Gastrocnemius medialis (tissue), 4 donors: ENCODE measurements at regions of chr11 and their contacts with region 1.

Region 1: GRCh38 chr11:18634140-18635032 is at the start of gene SPTY2D1:
- DNase-seq: peak; percentile 99 to 100
- ATAC-seq: peak; percentile 99 to 100
- H3K4me3 ChIP-seq: peak within 1 kb of the TSS; percentile 84 to 96 (median 90)
- H3K27ac ChIP-seq: peak within 1 kb of the TSS; percentile 94 to 98 (median 96)
- H3K4me1 ChIP-seq: peaks cover 17 to 20% of the 10 kb centered on the region in 2 donors
- H3K27me3 ChIP-seq: no peaks in the 10 kb centered on the region
- CTCF ChIP-seq: peak in 1 of 5 experiments; percentile 12
- POLR2A ChIP-seq: peak; percentile 86 to 89
- total RNA-seq, gene SPTY2D1: 13.3 to 21.7 (median 17.7) TPM

Region 2: GRCh38 chr11:18321980-18322711 is 312.2 kb before region 1 on chr11 and contains the starts of genes GTF2H1 and HPS5:
- in situ Hi-C with region 1: loop called in 2 of 4 experiments (anchors 10 kb)
- intact Hi-C with region 1: loop called (anchors 1 kb)
- DNase-seq: peak; percentile 93 to 95
- ATAC-seq: peak; percentile 99 to 100
- H3K4me3 ChIP-seq: peak within 1 kb of the TSS; percentile 88 to 89 (median 88)
- H3K27ac ChIP-seq: peak within 1 kb of the TSS; percentile 95 to 99 (median 98)
- H3K4me1 ChIP-seq: peaks cover 31 to 37% of the 10 kb centered on the region in 2 donors
- H3K27me3 ChIP-seq: no peaks in the 10 kb centered on the region
- CTCF ChIP-seq: peak in 1 of 5 experiments; percentile 54
- POLR2A ChIP-seq: peak; percentile 53 to 81
- total RNA-seq, gene GTF2H1: 30.9 to 45.6 (median 33.2) TPM
- total RNA-seq, gene HPS5: 5.3 to 13.1 (median 9.7) TPM

Region 3: GRCh38 chr11:18526521-18527296 is 107.7 kb before region 1 on chr11 and contains the start of gene TSG101:
- in situ Hi-C with region 1: no loop called
- intact Hi-C with region 1: loop called (anchors 1 kb)
- DNase-seq: peak; percentile 82 to 91
- ATAC-seq: peak; percentile 96 to 98
- H3K4me3 ChIP-seq: peak within 1 kb of the TSS; percentile 70 to 99 (median 97)
- H3K27ac ChIP-seq: peak within 1 kb of the TSS; percentile 91 to 98 (median 96)
- H3K4me1 ChIP-seq: peaks cover 30 to 33% of the 10 kb centered on the region in 2 donors
- H3K27me3 ChIP-seq: no peaks in the 10 kb centered on the region
- CTCF ChIP-seq: no peak
- POLR2A ChIP-seq: peak; percentile 80 to 86
- total RNA-seq, gene TSG101: 106 to 180 (median 170) TPM

Region 4: DNA sequence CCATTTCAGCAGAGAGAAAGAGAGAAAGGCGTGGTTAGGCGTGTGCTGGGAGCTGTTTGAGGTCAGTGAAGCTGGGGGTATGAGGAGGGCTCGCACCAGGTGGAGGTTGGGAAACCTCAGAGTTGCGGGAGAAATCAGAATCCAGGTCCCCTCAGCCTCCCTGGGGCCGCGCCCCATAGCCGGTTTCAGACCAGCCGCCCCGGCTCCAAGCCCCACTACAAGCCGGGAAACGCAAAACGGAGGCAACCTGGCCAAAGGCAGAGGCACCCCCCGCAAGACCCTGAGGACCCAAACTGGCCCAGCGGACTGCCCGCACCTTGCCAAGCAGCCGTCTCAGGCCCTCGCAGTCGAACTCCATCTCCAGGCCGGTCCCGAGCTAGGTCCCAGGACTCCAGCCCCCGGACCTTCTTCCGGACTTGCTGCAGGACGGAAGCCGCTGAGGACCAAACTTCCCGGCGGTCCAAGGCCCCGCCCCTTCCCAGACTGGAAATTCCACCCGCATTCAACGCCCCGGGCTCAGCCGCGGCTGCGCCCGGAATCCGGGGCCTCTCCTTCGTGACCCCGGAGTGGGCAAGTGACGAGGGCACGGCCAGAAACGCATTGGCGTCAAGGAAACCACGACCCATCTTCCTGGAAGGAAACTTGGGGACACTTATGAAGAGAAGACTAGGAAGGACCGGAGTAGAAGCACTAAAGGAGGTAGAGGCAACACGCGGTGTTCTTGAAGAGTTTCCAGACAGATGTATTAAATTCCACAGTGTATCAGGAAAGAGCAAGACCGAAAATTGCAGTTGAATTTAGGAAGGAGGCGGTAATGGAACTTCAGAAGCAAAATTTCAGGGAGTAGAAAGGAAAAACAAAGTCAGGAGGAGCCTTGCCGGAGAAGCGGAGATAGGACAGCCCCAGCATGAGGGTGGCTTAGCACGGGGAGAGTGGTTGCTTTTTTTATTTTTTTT is 45.8 kb before region 1 on chr11 and contains the start of gene UEVLD:
- in situ Hi-C with region 1: loop called in 1 of 4 experiments (anchors 5 kb)
- intact Hi-C with region 1: loop called (anchors 1 kb)
- DNase-seq: peak; percentile 81 to 87
- ATAC-seq: peak; percentile 92 to 97
- H3K4me3 ChIP-seq: peak within 1 kb of the TSS; percentile 72 to 91 (median 80)
- H3K27ac ChIP-seq: peak within 1 kb of the TSS; percentile 86 to 91 (median 90)
- H3K4me1 ChIP-seq: peaks cover 41 to 42% of the 10 kb centered on the region in 2 donors
- H3K27me3 ChIP-seq: no peaks in the 10 kb centered on the region
- CTCF ChIP-seq: peak in 1 of 5 experiments; percentile 30
- POLR2A ChIP-seq: peak; percentile 63 to 78
- total RNA-seq, gene UEVLD: 27.4 to 58.8 (median 30.3) TPM

Region 5: GRCh38 chr11:18594999-18595749 is 39.2 kb before region 1 on chr11:
- in situ Hi-C with region 1: loop called in 1 of 4 experiments (anchors 5 kb)
- intact Hi-C with region 1: no loop called
- DNase-seq: no peak
- ATAC-seq: no peak
- H3K4me3 ChIP-seq: no peak overlapping the region
- H3K27ac ChIP-seq: peak overlapping the region in 1 of 4 donors; percentile 25
- H3K4me1 ChIP-seq: peaks cover 15 to 19% of the 10 kb centered on the region in 2 donors
- H3K27me3 ChIP-seq: no peaks in the 10 kb centered on the region
- CTCF ChIP-seq: no peak
- POLR2A ChIP-seq: no peak

Region 6: GRCh38 chr11:18698341-18699268 is 64.2 kb after region 1 on chr11 and contains the start of gene TMEM86A:
- in situ Hi-C with region 1: loop called in 1 of 4 experiments (anchors 10 kb)
- intact Hi-C with region 1: loop called (anchors 1 kb)
- DNase-seq: peak; percentile 81 to 93
- ATAC-seq: peak; percentile 92 to 95
- H3K4me3 ChIP-seq: peak within 1 kb of the TSS; percentile 63 to 84 (median 78)
- H3K27ac ChIP-seq: peak within 1 kb of the TSS; percentile 77 to 88 (median 86)
- H3K4me1 ChIP-seq: peaks cover 8% of the 10 kb centered on the region in 2 donors
- H3K27me3 ChIP-seq: no peaks in the 10 kb centered on the region
- CTCF ChIP-seq: peak in 1 of 5 experiments; percentile 18
- POLR2A ChIP-seq: peak; percentile 84 to 94
- total RNA-seq, gene TMEM86A: 1.7 to 3.6 (median 2.8) TPM

Region 7: DNA sequence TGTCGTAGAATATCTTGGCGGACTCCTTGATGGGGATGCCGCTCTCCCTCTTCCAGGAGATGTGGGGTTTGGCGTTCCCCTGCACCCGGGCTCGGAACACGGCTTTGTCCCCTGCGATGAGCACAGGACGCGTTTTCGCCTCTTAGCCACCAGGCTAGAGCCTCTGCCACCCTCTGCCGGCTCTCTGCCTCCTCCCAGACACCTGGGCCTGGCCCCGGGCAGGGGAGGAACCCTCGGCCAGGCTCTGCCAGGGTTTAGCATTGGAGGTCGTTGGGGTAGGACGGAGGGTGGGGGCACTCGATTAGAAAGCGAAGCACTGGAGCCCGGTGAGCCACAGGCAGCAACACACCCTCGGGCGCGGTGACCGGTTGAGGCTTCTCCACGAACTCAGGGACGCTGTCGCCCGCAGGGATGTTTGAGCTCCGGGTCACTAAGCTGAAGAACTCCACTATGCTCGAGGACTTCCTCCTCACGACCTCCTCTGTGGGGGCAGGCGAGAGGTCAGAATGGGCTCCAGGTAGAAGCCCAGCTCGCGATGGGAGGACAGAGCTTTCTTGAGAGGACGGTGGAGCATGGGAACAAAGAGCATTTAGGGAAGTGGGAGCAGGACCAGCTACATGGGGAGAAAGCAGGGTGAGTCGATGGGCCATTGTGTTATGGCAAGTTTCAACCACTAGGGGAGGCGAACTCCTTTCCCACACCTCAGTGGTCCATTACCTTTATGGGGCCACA is 87.3 kb after region 1 on chr11:
- in situ Hi-C with region 1: no loop called
- intact Hi-C with region 1: loop called (anchors 5 kb)
- DNase-seq: no peak
- ATAC-seq: peak; percentile 66 to 72
- H3K4me3 ChIP-seq: peak overlapping the region; percentile 59 to 74 (median 65)
- H3K27ac ChIP-seq: peak overlapping the region; percentile 42 to 73 (median 55)
- H3K4me1 ChIP-seq: peaks cover 0 to 7% of the 10 kb centered on the region in 2 donors
- H3K27me3 ChIP-seq: no peaks in the 10 kb centered on the region
- CTCF ChIP-seq: peak; percentile 41 to 81 (median 64)
- POLR2A ChIP-seq: no peak